Body of pancreas (tissue), 4 donors: ENCODE measurements at regions of chr19 and their contacts with region 1.

Region 1: DNA sequence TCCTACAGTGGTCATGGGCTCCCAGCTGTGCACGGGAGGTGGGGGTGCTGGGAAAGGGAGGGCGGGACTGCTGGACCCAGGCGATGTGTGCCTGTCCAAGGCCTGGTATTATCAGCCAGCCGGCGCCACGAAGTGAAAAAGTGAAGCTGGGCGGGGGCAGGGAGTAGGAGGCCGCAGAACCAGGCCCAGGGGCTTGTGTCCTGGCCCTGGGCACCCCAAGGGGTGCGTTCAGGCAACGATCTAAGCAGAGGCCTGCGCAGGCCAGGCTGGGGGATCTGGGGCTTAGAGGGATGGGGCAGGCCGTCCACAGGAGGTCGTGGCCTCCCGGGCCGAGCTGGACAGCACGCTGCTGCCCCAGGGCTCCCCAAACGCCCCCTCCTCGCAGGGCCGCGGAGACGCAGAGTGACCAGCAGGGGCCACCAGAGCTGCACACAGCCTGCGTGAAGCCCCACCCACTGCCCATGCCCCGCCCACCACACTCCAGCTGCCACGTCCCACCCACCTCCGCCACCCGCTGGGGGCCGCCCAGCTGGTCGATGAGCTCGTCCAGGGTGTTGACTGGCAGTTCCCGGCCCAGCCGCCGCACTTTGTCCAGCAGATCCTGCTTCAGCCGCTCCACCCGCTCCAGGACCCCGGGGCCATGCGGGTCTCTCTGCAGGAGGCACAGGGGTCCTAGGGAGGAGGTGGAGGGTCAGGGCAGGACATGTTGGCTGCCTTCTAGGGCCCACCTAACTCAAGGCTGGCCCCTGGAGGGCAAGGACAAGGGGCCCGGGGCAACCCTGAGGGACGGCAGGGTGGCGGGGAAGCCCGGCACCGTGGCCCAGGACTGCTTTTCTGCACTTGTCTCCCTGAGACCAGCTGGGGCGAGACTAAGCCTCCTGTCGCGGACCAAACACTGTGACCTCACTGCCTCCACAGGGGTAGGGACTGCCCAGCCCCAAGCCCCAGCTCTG is 9.5 kb downstream of the GPX4 start:
- DNase-seq: peak; percentile 95 to 99 (median 98)
- ATAC-seq: peak; percentile 93
- H3K4me3 ChIP-seq: no peak overlapping the region
- H3K27ac ChIP-seq: peak overlapping the region; percentile 2 to 75 (median 58)
- H3K4me1 ChIP-seq: peaks cover 19% of the 10 kb centered on the region
- H3K27me3 ChIP-seq: no peaks in the 10 kb centered on the region
- CTCF ChIP-seq: peak; percentile 81 to 93 (median 88)
- POLR2A ChIP-seq: no peak

Region 2: GRCh38 chr19:1189419-1189818 is 76.1 kb after region 1 on chr19:
- intact Hi-C with region 1: loop called (anchors 5 kb)
- DNase-seq: no peak
- ATAC-seq: no peak
- H3K4me3 ChIP-seq: no peak overlapping the region
- H3K27ac ChIP-seq: no peak overlapping the region
- H3K4me1 ChIP-seq: no peaks in the 10 kb centered on the region
- H3K27me3 ChIP-seq: no peaks in the 10 kb centered on the region
- CTCF ChIP-seq: no peak
- POLR2A ChIP-seq: no peak

Region 3: DNA sequence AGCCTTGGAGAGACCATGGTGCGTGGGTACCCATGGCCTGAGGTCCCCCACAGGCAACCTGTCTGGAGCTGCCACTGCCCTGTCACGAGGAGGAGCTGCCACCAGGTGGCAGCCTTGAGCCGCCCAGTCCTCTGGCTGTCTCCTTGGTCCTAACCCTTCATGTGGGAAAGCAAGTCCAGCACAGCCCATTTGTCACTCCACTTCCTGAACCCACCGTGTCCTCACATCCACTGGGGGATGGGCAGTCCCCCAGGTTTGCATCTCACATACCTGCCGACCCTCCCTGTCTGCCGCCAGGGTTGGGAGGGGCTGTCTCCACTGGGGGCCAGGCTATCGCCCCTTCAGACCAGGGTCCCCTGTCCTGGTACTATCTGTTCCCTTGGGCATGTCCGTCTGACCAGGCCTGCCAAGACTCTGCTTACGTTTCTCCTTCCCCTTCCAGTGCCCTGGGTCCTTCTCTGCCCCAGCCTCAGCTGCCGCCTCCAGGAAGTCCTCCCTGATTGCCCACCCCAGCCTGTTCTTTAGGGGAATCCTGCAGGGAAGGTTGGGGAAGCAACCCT is 166.6 kb after region 1 on chr19:
- intact Hi-C with region 1: no loop called
- DNase-seq: peak; percentile 82 to 86 (median 83)
- ATAC-seq: peak; percentile 31
- H3K4me3 ChIP-seq: no peak overlapping the region
- H3K27ac ChIP-seq: no peak overlapping the region
- H3K4me1 ChIP-seq: peaks cover 17% of the 10 kb centered on the region
- H3K27me3 ChIP-seq: peaks cover 0 to under 1% of the 10 kb centered on the region in 2 donors
- CTCF ChIP-seq: peak; percentile 85 to 96 (median 90)
- POLR2A ChIP-seq: no peak